Naive thymus-derived CD4-positive, alpha-beta T cell (primary cell): ENCODE measurements at regions of chr13 and their contacts with region 1.

Region 1: DNA sequence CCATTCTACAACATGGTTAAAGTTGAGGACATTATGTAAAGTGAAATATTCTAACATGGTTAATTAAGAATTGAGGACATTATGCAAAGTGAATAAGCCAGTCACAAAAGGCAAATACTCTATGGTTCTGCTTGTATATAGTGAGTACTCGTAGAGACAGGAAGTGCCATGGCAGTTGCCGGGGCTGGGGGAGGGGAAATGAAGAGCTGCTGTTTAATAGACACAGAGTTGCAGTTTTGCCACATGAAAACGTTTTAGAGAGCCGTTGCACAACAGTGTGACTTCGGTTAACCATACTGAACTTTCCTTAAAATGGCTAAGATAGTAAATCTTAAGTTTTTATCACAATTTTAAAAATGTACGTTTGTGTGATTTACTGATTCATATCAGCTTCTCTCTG is 176.9 kb downstream of the SHISA2 start:
- DNase-seq: peak in 8 of 9 donors; percentile 24 to 84 (median 76)
- ATAC-seq: peak; percentile 90
- H3K4me3 ChIP-seq: peak overlapping the region; percentile 12
- H3K4me3 Mint-ChIP-seq: peak overlapping the region in 9 of 10 donors; percentile 14 to 71 (median 66)
- H3K27ac ChIP-seq: peak overlapping the region; percentile 55
- H3K27ac Mint-ChIP-seq: peak overlapping the region; percentile 57 to 94 (median 87)
- H3K4me1 ChIP-seq: peaks cover 15 to 44% of the 10 kb centered on the region in 2 donors
- H3K4me1 Mint-ChIP-seq: peaks cover 36 to 95% (median 79%) of the 10 kb centered on the region in 7 donors
- H3K27me3 ChIP-seq: no peaks in the 10 kb centered on the region
- H3K27me3 Mint-ChIP-seq: no peaks in the 10 kb centered on the region

Region 2: GRCh38 chr13:25707726-25708125 is 167.2 kb before region 1 on chr13:
- CTCF ChIA-PET with region 1: no interaction called
- POLR2A ChIA-PET with region 1: no interaction called
- intact Hi-C with region 1: no loop called
- DNase-seq: no peak
- ATAC-seq: no peak
- H3K4me3 ChIP-seq: no peak overlapping the region
- H3K4me3 Mint-ChIP-seq: no peak overlapping the region
- H3K27ac ChIP-seq: no peak overlapping the region
- H3K27ac Mint-ChIP-seq: no peak overlapping the region
- H3K4me1 ChIP-seq: no peaks in the 10 kb centered on the region
- H3K4me1 Mint-ChIP-seq: peaks cover 0 to 3% (median 0%) of the 10 kb centered on the region in 7 donors
- H3K27me3 ChIP-seq: no peaks in the 10 kb centered on the region
- H3K27me3 Mint-ChIP-seq: peaks cover 0 to 12% (median 0%) of the 10 kb centered on the region in 5 donors

Region 3: GRCh38 chr13:25847145-25847544 is 27.8 kb before region 1 on chr13:
- CTCF ChIA-PET with region 1: no interaction called
- POLR2A ChIA-PET with region 1: interaction called, 4 read pairs
- intact Hi-C with region 1: loop called (anchors 2 kb)
- DNase-seq: peak in 7 of 9 donors; percentile 17 to 65 (median 47)
- ATAC-seq: peak; percentile 75
- H3K4me3 ChIP-seq: peak overlapping the region; percentile 38
- H3K4me3 Mint-ChIP-seq: peak overlapping the region; percentile 26 to 75 (median 66)
- H3K27ac ChIP-seq: peak overlapping the region; percentile 39
- H3K27ac Mint-ChIP-seq: peak overlapping the region; percentile 6 to 91 (median 72)
- H3K4me1 ChIP-seq: peaks cover 13 to 23% of the 10 kb centered on the region in 2 donors
- H3K4me1 Mint-ChIP-seq: peaks cover 21 to 48% (median 38%) of the 10 kb centered on the region in 7 donors
- H3K27me3 ChIP-seq: no peaks in the 10 kb centered on the region
- H3K27me3 Mint-ChIP-seq: peaks cover 0 to 3% (median 0%) of the 10 kb centered on the region in 5 donors

Region 4: GRCh38 chr13:25886438-25887214 is 11.7 kb after region 1 on chr13:
- CTCF ChIA-PET with region 1: no interaction called
- POLR2A ChIA-PET with region 1: interaction called, 4 read pairs
- intact Hi-C with region 1: loop called (anchors 1 kb)
- DNase-seq: peak in 1 of 9 donors; percentile 49
- ATAC-seq: no peak
- H3K4me3 ChIP-seq: no peak overlapping the region
- H3K4me3 Mint-ChIP-seq: peak overlapping the region in 1 of 10 donors; percentile 12
- H3K27ac ChIP-seq: no peak overlapping the region
- H3K27ac Mint-ChIP-seq: peak overlapping the region in 7 of 9 donors; percentile 1 to 86 (median 68)
- H3K4me1 ChIP-seq: peaks cover 0 to 36% of the 10 kb centered on the region in 2 donors
- H3K4me1 Mint-ChIP-seq: peaks cover 27 to 83% (median 63%) of the 10 kb centered on the region in 7 donors
- H3K27me3 ChIP-seq: no peaks in the 10 kb centered on the region
- H3K27me3 Mint-ChIP-seq: no peaks in the 10 kb centered on the region

Region 5: GRCh38 chr13:26011996-26012821 is 137.3 kb after region 1 on chr13:
- CTCF ChIA-PET with region 1: no interaction called
- POLR2A ChIA-PET with region 1: interaction called, 3 read pairs
- intact Hi-C with region 1: loop called in 1 of 2 experiments (anchors 1 kb)
- DNase-seq: peak; percentile 51 to 88 (median 75)
- ATAC-seq: peak; percentile 95
- H3K4me3 ChIP-seq: peak overlapping the region; percentile 77
- H3K4me3 Mint-ChIP-seq: peak overlapping the region; percentile 81 to 89 (median 86)
- H3K27ac ChIP-seq: peak overlapping the region; percentile 90
- H3K27ac Mint-ChIP-seq: peak overlapping the region; percentile 67 to 95 (median 90)
- H3K4me1 ChIP-seq: peaks cover 0 to 8% of the 10 kb centered on the region in 2 donors
- H3K4me1 Mint-ChIP-seq: peaks cover 11 to 65% (median 48%) of the 10 kb centered on the region in 7 donors
- H3K27me3 ChIP-seq: no peaks in the 10 kb centered on the region
- H3K27me3 Mint-ChIP-seq: no peaks in the 10 kb centered on the region

Region 6: DNA sequence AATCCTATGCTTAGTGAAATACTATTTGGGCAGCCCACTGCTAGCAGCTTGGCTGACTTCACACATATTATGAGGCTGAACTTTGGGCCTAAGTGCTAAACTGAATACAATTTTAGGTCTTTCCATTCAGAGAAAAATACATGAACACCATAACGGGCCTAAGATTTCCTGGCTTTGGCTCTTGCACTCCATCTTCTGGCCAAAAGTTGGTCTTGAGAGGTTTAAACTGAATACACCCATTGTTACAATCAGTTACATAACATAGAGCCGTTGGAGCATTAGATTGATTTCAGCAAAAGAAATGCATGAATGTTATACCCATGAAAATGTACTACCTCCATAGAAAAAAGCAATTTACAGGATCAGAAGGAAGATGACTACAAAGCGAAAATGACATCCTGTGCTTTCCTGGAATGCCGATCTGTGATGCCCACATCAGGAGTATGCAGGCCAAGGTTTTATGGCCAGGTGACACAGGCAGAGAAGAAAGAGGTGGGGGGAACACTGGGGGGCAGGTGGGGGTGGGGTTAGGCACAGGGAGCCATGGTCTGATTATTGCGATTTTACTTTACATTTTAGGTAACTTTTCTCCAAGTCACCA is 188.0 kb after region 1 on chr13:
- CTCF ChIA-PET with region 1: no interaction called
- POLR2A ChIA-PET with region 1: no interaction called
- intact Hi-C with region 1: loop called (anchors 1 to 5 kb)
- DNase-seq: peak in 7 of 9 donors; percentile 30 to 67 (median 58)
- ATAC-seq: peak; percentile 66
- H3K4me3 ChIP-seq: no peak overlapping the region
- H3K4me3 Mint-ChIP-seq: no peak overlapping the region
- H3K27ac ChIP-seq: no peak overlapping the region
- H3K27ac Mint-ChIP-seq: no peak overlapping the region
- H3K4me1 ChIP-seq: no peaks in the 10 kb centered on the region
- H3K4me1 Mint-ChIP-seq: peaks cover 0 to 16% (median 4%) of the 10 kb centered on the region in 7 donors
- H3K27me3 ChIP-seq: no peaks in the 10 kb centered on the region
- H3K27me3 Mint-ChIP-seq: peaks cover 0 to 7% (median 0%) of the 10 kb centered on the region in 5 donors